Activated CD8-positive, alpha-beta T cell treated with anti-CD3 and anti-CD28 coated beads, Interleukin-2, amount 10 ng/mL, durations not matched to agents 7 days and 5 days (primary cell): ENCODE measurements at regions of chr4 and their contacts with region 1.

Region 1: GRCh38 chr4:98995183-98996055 is at the start of gene METAP1:
- DNase-seq: peak; percentile 97
- ATAC-seq: peak; percentile 96
- H3K4me3 Mint-ChIP-seq: peak within 1 kb of the TSS; percentile 88
- H3K27ac Mint-ChIP-seq: peak within 1 kb of the TSS; percentile 99
- H3K4me1 Mint-ChIP-seq: peaks cover 35% of the 10 kb centered on the region
- H3K27me3 Mint-ChIP-seq: no peaks in the 10 kb centered on the region
- total RNA-seq, gene METAP1: 47.3 to 58.7 TPM

Region 2: DNA sequence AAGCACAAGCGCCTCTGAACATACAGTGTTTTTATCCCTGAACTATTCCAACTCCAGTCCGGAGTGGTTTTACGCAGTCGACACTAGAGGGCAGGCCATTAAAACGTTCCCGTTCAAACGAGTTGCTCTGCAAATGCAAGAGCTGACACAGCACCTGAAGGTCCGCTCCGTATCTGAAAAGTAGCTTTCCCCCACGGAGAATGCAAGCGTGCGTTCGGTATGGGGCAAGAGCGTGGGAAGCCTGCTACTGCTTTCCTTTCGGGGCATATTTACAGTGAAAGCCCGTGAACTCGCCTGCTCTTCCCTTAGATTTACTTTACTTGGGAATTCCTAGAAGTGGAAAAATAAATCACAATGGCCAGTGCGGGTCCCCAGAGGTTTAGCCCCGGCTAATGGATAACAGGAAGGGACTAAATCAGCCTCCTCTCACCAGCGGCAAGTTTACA is 527.8 kb before region 1 on chr4:
- CTCF ChIA-PET with region 1: interaction called, 17 read pairs
- POLR2A ChIA-PET with region 1: no interaction called
- DNase-seq: peak; percentile 81
- ATAC-seq: peak; percentile 92
- H3K4me3 Mint-ChIP-seq: peak overlapping the region; percentile 62
- H3K27ac Mint-ChIP-seq: peak overlapping the region; percentile 69
- H3K4me1 Mint-ChIP-seq: peaks cover 33% of the 10 kb centered on the region
- H3K27me3 Mint-ChIP-seq: no peaks in the 10 kb centered on the region

Region 3: GRCh38 chr4:98720871-98721480 is 274.4 kb before region 1 on chr4:
- CTCF ChIA-PET with region 1: no interaction called
- POLR2A ChIA-PET with region 1: no interaction called
- DNase-seq: no peak
- ATAC-seq: no peak
- H3K4me3 Mint-ChIP-seq: no peak overlapping the region
- H3K27ac Mint-ChIP-seq: no peak overlapping the region
- H3K4me1 Mint-ChIP-seq: no peaks in the 10 kb centered on the region
- H3K27me3 Mint-ChIP-seq: no peaks in the 10 kb centered on the region

Region 4: GRCh38 chr4:99011910-99012309 is 16.5 kb after region 1 on chr4:
- CTCF ChIA-PET with region 1: interaction called, 18 read pairs
- POLR2A ChIA-PET with region 1: no interaction called
- DNase-seq: no peak
- ATAC-seq: no peak
- H3K4me3 Mint-ChIP-seq: no peak overlapping the region
- H3K27ac Mint-ChIP-seq: no peak overlapping the region
- H3K4me1 Mint-ChIP-seq: no peaks in the 10 kb centered on the region
- H3K27me3 Mint-ChIP-seq: no peaks in the 10 kb centered on the region

Region 5: DNA sequence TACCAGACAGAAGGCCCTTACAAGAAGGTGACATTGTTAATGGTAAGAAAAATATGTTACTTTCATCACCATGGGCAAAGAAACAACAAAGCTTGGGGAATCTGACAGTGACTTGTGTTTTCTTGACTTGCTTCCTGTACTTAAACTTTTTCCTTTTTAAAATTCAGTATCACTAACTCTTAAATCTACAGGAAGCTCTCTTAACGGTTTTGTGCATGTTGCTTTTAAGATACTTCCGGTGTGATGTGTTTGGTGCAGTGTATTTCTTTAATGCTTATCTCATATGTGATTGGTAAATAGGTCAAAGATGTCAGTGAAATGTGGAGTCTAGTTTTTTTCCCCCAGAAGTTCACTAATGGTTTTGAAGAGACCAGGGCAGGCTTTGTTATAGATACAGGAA is 47.9 kb after region 1 on chr4:
- CTCF ChIA-PET with region 1: interaction called, 36 read pairs
- POLR2A ChIA-PET with region 1: interaction called, 17 read pairs
- DNase-seq: no peak
- ATAC-seq: peak; percentile 77
- H3K4me3 Mint-ChIP-seq: peak overlapping the region; percentile 46
- H3K27ac Mint-ChIP-seq: peak overlapping the region; percentile 89
- H3K4me1 Mint-ChIP-seq: peaks cover 17% of the 10 kb centered on the region
- H3K27me3 Mint-ChIP-seq: no peaks in the 10 kb centered on the region

Region 6: GRCh38 chr4:99062120-99062519 is 66.7 kb after region 1 on chr4:
- CTCF ChIA-PET with region 1: interaction called, 261 read pairs
- POLR2A ChIA-PET with region 1: no interaction called
- DNase-seq: no peak
- ATAC-seq: no peak
- H3K4me3 Mint-ChIP-seq: no peak overlapping the region
- H3K27ac Mint-ChIP-seq: no peak overlapping the region
- H3K4me1 Mint-ChIP-seq: no peaks in the 10 kb centered on the region
- H3K27me3 Mint-ChIP-seq: no peaks in the 10 kb centered on the region

Region 7: DNA sequence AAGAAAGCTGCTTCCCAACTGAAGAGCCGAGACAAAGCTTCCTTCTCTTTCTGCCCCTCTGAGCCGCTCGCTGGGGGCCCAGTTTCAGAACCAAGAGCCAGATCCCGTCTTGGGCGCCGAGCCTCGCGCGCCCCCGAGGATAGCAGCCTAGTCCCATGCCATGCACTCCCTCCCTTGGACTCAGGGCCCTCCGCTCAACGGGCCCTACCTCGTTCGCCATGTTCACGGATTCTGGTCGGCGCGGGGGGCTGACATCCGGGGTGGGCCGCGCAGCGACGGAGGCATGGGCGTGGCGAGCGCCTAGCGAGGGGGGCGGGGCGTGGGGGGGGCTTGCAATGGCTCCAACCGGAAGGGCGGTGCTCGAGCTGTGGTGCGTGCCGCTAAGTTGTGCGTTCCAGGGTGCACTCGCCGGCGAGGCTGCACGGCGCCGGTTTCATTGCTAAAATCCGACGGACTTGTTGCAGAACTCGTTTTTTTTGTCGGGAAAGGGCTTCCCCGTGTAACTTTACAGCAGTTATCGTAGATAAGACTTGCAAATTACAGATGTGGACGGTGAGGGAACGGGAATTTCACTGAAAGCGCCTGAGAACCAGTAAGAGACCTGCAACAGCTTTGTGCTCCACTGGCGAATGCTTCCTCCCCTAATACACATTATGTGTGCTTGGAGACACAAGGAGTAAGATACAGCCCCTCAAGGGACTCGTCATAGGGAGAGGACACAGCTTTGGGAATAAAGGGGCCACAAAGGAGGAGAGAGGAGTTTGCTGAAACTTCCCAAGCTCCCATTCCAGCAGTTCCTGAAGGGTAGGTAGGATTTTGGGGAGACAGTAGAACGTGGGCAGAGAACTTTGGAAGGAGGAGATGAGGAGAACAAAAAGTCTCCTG is 93.3 kb after region 1 on chr4 and contains the start of gene ADH5:
- CTCF ChIA-PET with region 1: interaction called, 38 read pairs
- POLR2A ChIA-PET with region 1: interaction called, 59 read pairs
- DNase-seq: peak; percentile 94
- ATAC-seq: peak; percentile 97
- H3K4me3 Mint-ChIP-seq: peak within 1 kb of the TSS; percentile 97
- H3K27ac Mint-ChIP-seq: peak within 1 kb of the TSS; percentile 99
- H3K4me1 Mint-ChIP-seq: peaks cover 45% of the 10 kb centered on the region
- H3K27me3 Mint-ChIP-seq: no peaks in the 10 kb centered on the region
- total RNA-seq, gene ADH5: 107 to 113 TPM